ENCODE measurements at regions of chr1 and their contacts with region 1.

Region 1: DNA sequence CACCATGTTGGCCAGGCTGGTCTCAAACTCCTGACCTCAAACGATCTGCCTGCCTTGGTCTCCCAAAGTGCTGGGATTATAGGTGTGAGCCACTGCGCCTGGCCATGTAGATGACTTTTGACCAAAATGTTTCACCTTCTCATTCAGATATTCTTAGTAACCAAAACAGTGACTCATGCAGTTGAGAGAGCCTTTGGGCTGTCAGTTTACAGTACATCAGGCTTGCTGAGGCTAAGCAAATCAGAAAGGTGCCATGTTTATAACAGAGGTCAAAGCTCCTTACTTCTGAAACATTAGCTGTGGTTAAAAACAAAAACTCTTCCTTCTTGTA is 21.0 kb downstream of the CNIH4 start:
- DNase-seq: peak; percentile 56
- ATAC-seq: peak; percentile 68
- H3K4me3 Mint-ChIP-seq: no peak overlapping the region
- H3K27ac Mint-ChIP-seq: peak overlapping the region; percentile 82
- H3K4me1 Mint-ChIP-seq: peaks cover 94% of the 10 kb centered on the region
- H3K27me3 Mint-ChIP-seq: no peaks in the 10 kb centered on the region

Region 2: DNA sequence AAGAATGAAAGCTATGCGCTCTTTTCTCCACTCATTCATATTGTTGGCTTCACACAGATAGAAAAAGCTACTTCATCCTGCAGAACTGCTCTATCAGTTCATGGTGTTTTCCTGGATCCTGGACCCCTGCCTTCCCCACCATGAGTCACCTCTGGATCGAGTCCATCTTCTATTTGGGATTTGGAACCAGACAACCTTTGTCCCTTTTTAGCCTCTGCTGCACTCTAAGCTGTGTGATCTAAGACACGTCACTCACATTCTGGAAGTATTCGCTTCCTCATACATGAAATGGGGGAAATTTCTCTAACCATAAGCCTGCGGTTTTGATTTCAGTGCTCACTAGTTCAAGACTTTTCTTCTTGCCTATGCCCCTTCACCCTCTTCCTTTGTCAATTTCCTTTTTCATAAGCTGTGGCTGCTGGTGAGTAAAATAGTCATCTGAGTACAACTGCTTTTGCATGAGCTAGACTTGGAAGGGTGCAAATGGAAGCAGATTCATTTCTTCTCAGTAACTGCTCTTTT is 208.7 kb before region 1 on chr1:
- CTCF ChIA-PET with region 1: no interaction called
- POLR2A ChIA-PET with region 1: interaction called, 3 read pairs
- intact Hi-C with region 1: loop called in 1 of 2 experiments (anchors 5 kb)
- DNase-seq: peak; percentile 29
- ATAC-seq: peak; percentile 96
- H3K4me3 Mint-ChIP-seq: peak overlapping the region; percentile 14
- H3K27ac Mint-ChIP-seq: peak overlapping the region; percentile 55
- H3K4me1 Mint-ChIP-seq: peaks cover 36% of the 10 kb centered on the region
- H3K27me3 Mint-ChIP-seq: no peaks in the 10 kb centered on the region

Region 3: DNA sequence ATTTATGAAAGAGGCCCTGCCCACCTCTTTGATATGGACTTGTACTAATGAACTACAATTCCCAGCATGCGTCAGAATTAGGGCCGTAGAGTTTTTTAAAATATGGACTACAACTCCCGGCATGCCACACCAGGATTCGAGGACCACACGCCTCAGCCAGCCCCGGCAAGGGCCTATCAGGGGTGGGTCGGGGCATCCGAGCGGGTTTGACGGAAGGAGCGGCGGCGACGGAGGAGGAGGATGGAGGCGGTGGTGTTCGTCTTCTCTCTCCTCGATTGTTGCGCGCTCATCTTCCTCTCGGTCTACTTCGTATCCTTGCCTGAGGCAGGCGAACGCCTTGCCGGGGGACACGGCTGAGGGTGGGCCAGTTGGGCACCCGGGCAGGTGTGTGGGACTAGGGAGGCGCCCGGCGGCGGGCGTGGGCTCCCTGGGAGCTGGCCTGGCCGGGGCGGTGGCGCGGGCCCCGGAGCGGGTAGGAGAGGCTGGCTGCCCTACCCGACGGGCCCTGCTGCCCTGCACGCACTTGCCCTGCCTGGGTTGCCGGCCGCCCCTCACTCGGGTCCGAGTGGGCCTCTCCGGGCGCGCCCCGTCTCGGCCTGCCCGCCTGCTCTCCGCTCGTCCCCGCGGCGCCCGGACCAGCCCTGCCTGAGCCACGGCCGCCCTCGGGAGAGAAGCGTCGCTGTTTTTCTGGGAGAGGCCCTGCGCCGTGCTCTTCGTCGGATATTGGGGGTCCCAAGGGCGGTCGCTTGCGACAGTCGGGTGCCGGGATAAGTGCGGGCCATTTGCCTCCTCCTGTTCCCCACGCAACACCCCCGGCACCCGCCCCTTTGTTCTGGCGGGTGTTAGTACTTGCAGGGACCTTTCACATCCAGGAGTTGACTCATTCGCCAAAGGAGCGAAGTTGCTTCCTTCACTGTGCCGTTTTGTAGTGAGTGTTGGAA is 20.7 kb before region 1 on chr1 and contains the start of gene CNIH4:
- CTCF ChIA-PET with region 1: interaction called, 8 read pairs
- POLR2A ChIA-PET with region 1: interaction called, 4 read pairs
- intact Hi-C with region 1: loop called (anchors 1 to 2 kb)
- DNase-seq: peak; percentile 95
- ATAC-seq: peak; percentile 98
- H3K4me3 Mint-ChIP-seq: peak within 1 kb of the TSS; percentile 80
- H3K27ac Mint-ChIP-seq: peak within 1 kb of the TSS; percentile 89
- H3K4me1 Mint-ChIP-seq: peaks cover 30% of the 10 kb centered on the region
- H3K27me3 Mint-ChIP-seq: no peaks in the 10 kb centered on the region
- total RNA-seq, gene CNIH4: 29.9 to 49.6 TPM

Region 4: GRCh38 chr1:224392411-224393249 is 15.0 kb after region 1 on chr1:
- CTCF ChIA-PET with region 1: no interaction called
- POLR2A ChIA-PET with region 1: interaction called, 5 read pairs
- intact Hi-C with region 1: loop called in 1 of 2 experiments (anchors 2 kb)
- DNase-seq: no peak
- ATAC-seq: peak; percentile 89
- H3K4me3 Mint-ChIP-seq: no peak overlapping the region
- H3K27ac Mint-ChIP-seq: peak overlapping the region; percentile 77
- H3K4me1 Mint-ChIP-seq: peaks cover 44% of the 10 kb centered on the region
- H3K27me3 Mint-ChIP-seq: no peaks in the 10 kb centered on the region

Region 5: GRCh38 chr1:224615861-224616755 is 238.5 kb after region 1 on chr1 and contains the start of gene CNIH3:
- CTCF ChIA-PET with region 1: no interaction called
- POLR2A ChIA-PET with region 1: no interaction called
- intact Hi-C with region 1: no loop called
- DNase-seq: peak; percentile 56
- ATAC-seq: peak; percentile 73
- H3K4me3 Mint-ChIP-seq: peak within 1 kb of the TSS; percentile 42
- H3K27ac Mint-ChIP-seq: no peak within 1 kb of the TSS
- H3K4me1 Mint-ChIP-seq: peaks cover 30% of the 10 kb centered on the region
- H3K27me3 Mint-ChIP-seq: peaks cover 46% of the 10 kb centered on the region
- total RNA-seq, gene CNIH3: 1.5 to 1.8 TPM